ENCODE measurements at regions of chr15 and their contacts with region 1.

Region 1: DNA sequence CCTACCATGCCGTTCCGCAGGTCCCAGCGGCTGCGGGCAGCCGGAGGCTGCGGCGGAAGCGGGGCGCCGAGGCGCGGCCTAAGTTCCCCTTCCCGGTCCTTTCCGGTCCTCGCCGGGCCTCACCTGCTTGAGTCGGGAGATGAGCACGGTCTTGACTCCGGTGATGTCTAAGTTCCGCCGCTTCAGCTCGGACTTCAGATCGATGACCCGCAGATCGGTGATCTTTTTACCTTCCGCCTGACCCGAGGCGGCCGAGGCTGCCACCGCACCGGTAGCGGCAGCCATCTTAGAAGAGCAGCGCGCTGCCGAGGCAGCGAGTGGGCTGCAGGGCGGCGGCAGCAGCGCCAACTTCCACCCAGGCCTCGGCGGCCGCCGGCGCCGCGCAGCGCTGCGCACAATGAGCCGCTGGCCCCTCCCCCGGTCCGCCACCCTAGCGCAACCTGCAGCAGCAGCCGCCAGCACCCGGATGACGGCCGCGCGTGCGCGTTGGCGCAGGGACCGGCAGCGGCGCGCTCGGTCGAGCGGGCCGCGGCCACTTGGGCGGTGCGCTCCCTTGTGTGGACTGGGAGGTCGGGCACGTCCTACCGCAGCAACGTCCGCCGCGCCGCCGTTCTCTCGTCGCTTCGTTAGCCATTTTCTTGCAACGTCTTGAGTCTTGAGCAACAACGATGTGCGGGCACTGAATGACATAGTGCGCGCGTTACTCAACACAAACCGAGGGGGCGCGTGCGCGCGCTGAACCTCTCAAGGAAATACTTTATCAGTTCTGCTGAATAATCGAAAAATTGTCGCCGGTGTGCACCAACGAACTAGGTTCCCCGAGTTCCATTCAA is at the start of gene SLTM:
- H3K4me3 Mint-ChIP-seq: peak within 1 kb of the TSS; percentile 96
- H3K27ac Mint-ChIP-seq: peak within 1 kb of the TSS; percentile 99
- H3K4me1 Mint-ChIP-seq: no peaks in the 10 kb centered on the region
- H3K27me3 Mint-ChIP-seq: no peaks in the 10 kb centered on the region

Region 2: DNA sequence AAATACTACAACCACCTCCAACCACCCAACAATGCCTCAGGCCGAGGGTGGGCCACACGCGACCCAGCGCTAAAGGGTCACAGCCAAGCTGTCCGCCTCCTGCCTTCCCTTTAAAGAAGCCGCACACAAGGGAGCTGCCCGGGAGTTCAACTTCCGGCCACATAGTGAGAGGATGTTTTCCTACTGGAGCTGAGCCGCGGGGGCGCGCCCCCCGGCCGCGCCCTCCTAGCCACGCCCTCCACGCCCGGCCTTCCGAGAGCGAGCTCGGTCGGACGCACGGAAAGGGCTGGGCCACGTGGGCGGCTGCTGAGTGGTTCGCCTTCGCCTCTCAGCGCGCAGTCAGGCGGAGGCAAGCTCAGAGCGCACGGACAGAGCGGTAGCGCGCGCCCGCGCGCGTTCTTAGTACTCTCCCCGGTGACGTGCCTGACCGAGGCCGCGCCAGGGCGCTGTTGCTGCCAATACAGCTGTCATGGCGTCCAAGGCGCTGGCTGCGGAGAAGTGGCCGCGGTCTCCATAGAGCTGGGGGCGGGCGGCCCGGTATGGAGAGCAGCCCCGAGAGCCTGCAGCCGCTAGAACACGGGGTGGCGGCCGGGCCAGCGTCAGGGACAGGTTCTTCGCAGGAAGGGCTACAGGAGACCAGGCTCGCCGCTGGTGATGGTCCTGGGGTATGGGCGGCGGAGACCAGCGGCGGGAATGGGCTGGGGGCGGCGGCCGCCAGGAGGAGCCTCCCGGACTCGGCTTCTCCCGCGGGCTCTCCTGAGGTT is 162.5 kb before region 1 on chr15 and contains the start of gene MINDY2:
- intact Hi-C with region 1: loop called (anchors 2 kb)
- H3K4me3 Mint-ChIP-seq: peak within 1 kb of the TSS; percentile 96
- H3K27ac Mint-ChIP-seq: peak within 1 kb of the TSS; percentile 96
- H3K4me1 Mint-ChIP-seq: peaks cover 23% of the 10 kb centered on the region
- H3K27me3 Mint-ChIP-seq: no peaks in the 10 kb centered on the region

Region 3: GRCh38 chr15:58987489-58988005 is 54.0 kb after region 1 on chr15 and contains the start of gene RNF111:
- intact Hi-C with region 1: loop called (anchors 5 kb)
- H3K4me3 Mint-ChIP-seq: peak within 1 kb of the TSS; percentile 95
- H3K27ac Mint-ChIP-seq: peak within 1 kb of the TSS; percentile 98
- H3K4me1 Mint-ChIP-seq: peaks cover 48% of the 10 kb centered on the region
- H3K27me3 Mint-ChIP-seq: no peaks in the 10 kb centered on the region

Region 4: GRCh38 chr15:59002418-59002859 is 68.9 kb after region 1 on chr15:
- intact Hi-C with region 1: no loop called
- H3K4me3 Mint-ChIP-seq: no peak overlapping the region
- H3K27ac Mint-ChIP-seq: peak overlapping the region; percentile 58
- H3K4me1 Mint-ChIP-seq: peaks cover 65% of the 10 kb centered on the region
- H3K27me3 Mint-ChIP-seq: no peaks in the 10 kb centered on the region

Region 5: DNA sequence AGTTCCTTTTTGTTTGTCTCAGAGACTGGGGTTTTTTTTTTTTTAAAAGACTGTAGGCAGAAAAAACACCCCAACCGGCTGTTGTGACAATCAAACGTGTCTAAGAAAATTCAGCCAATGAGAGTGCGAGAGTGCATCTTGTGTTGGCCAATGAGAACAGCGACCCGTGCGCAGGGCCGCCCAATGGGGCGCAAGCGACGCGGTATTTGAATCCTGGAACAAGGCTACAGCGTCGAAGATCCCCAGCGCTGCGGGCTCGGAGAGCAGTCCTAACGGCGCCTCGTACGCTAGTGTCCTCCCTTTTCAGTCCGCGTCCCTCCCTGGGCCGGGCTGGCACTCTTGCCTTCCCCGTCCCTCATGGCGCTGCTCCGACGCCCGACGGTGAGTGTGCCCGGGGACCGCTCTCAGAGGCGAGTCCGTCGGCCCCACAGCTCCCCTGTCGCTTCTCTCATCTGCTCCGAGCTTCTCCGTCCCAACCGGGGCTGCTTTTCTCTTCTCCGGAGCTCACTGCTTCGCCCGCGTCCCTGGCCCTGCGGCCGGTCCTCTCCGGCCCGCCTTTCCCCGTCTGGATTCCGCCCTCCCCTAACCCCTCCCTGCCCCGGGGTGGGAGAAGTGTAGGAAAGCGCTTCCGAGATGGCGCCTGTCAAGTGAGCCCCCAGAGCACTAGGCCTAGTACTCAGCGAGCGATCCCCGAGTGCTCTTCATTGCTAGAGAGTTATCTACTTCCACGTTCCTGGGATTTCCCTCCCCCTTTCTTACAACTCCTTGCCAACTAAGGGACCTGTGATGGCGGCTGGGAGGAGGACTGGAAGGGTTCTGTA is 171.6 kb after region 1 on chr15 and contains the start of gene CCNB2:
- intact Hi-C with region 1: loop called (anchors 5 kb)
- H3K4me3 Mint-ChIP-seq: peak within 1 kb of the TSS; percentile 84
- H3K27ac Mint-ChIP-seq: peak within 1 kb of the TSS; percentile 97
- H3K4me1 Mint-ChIP-seq: peaks cover 24% of the 10 kb centered on the region
- H3K27me3 Mint-ChIP-seq: no peaks in the 10 kb centered on the region

Measured in dendritic cell treated with granulocyte-macrophage colony-stimulating factor and Interleukin-4, amounts not matched to agents 40 ng/mL and 50 ng/mL, for 4 days (primary cell).